ENCODE measurements at regions of chr12 and their contacts with region 1.

Region 1: GRCh38 chr12:48183091-48183875 is at the start of gene CCDC184:
- DNase-seq: peak; percentile 51 to 93 (median 68)
- ATAC-seq: peak; percentile 76
- H3K4me3 ChIP-seq: peak within 1 kb of the TSS; percentile 76
- H3K4me3 Mint-ChIP-seq: peak within 1 kb of the TSS; percentile 93
- H3K27ac ChIP-seq: no peak within 1 kb of the TSS
- H3K27ac Mint-ChIP-seq: peak within 1 kb of the TSS; percentile 50
- H3K4me1 ChIP-seq: peaks cover 25% of the 10 kb centered on the region
- H3K4me1 Mint-ChIP-seq: no peaks in the 10 kb centered on the region
- H3K27me3 ChIP-seq: peaks cover 14 to 15% of the 10 kb centered on the region in 2 experiments
- H3K27me3 Mint-ChIP-seq: peaks cover 47% of the 10 kb centered on the region
- CTCF ChIP-seq: peak; percentile 51
- total RNA-seq, gene CCDC184: 0.92 to 1.0 TPM

Region 2: DNA sequence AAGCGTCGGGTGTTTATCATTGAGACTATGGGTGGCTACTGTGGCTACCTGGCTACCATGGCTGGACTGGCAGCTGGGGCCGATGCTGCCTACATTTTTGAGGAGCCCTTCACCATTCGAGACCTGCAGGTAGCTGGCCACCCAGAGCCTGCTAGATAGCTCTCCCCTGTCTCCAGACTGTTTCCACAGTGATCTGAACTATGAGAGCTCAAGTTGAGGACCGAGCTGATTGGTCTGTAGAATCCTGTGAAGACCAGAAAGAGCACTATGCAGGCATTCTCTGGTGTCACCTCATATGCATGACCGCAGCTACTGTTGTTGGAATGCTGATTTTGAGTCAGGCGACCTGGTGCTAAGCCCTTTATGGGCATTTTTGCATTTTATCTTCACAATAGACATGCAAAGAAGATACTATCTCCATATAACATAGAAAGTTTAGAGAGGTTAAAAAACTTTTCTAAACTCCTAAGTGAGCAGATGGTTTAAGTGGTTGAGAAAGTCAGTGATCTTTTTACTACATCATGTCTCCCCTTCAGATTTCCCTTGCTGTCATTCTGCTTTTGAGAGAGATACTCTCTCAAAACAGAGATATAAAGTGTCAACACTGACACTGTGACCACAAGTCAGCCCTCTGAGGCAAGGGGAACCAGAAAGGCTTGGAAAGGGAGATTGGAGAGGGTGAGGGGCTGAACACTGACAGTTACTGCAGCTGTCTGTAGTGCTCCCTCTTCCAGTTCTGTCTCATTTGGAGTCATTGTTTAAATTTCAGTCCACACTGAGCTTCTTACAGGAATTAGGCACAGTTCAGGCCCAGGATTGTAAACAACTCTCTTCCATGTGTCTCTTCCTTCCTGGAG is 40.2 kb before region 1 on chr12:
- CTCF ChIA-PET with region 1: no interaction called
- POLR2A ChIA-PET with region 1: no interaction called
- intact Hi-C with region 1: no loop called
- DNase-seq: no peak
- ATAC-seq: no peak
- H3K4me3 ChIP-seq: no peak overlapping the region
- H3K4me3 Mint-ChIP-seq: no peak overlapping the region
- H3K27ac ChIP-seq: no peak overlapping the region
- H3K27ac Mint-ChIP-seq: peak overlapping the region; percentile 31
- H3K4me1 ChIP-seq: no peaks in the 10 kb centered on the region
- H3K4me1 Mint-ChIP-seq: no peaks in the 10 kb centered on the region
- H3K27me3 ChIP-seq: no peaks in the 10 kb centered on the region
- H3K27me3 Mint-ChIP-seq: no peaks in the 10 kb centered on the region
- CTCF ChIP-seq: no peak

Region 3: GRCh38 chr12:48216785-48217184 is 33.5 kb after region 1 on chr12:
- CTCF ChIA-PET with region 1: no interaction called
- POLR2A ChIA-PET with region 1: no interaction called
- intact Hi-C with region 1: no loop called
- DNase-seq: no peak
- ATAC-seq: no peak
- H3K4me3 ChIP-seq: no peak overlapping the region
- H3K4me3 Mint-ChIP-seq: no peak overlapping the region
- H3K27ac ChIP-seq: no peak overlapping the region
- H3K27ac Mint-ChIP-seq: no peak overlapping the region
- H3K4me1 ChIP-seq: peaks cover 8% of the 10 kb centered on the region
- H3K4me1 Mint-ChIP-seq: peaks cover 16% of the 10 kb centered on the region
- H3K27me3 ChIP-seq: no peaks in the 10 kb centered on the region
- H3K27me3 Mint-ChIP-seq: peaks cover 8% of the 10 kb centered on the region
- CTCF ChIP-seq: no peak

Region 4: GRCh38 chr12:48263617-48264016 is 80.3 kb after region 1 on chr12:
- CTCF ChIA-PET with region 1: no interaction called
- POLR2A ChIA-PET with region 1: no interaction called
- intact Hi-C with region 1: no loop called
- DNase-seq: no peak
- ATAC-seq: no peak
- H3K4me3 ChIP-seq: no peak overlapping the region
- H3K4me3 Mint-ChIP-seq: no peak overlapping the region
- H3K27ac ChIP-seq: no peak overlapping the region
- H3K27ac Mint-ChIP-seq: no peak overlapping the region
- H3K4me1 ChIP-seq: no peaks in the 10 kb centered on the region
- H3K4me1 Mint-ChIP-seq: no peaks in the 10 kb centered on the region
- H3K27me3 ChIP-seq: no peaks in the 10 kb centered on the region
- H3K27me3 Mint-ChIP-seq: peaks cover 24% of the 10 kb centered on the region
- CTCF ChIP-seq: no peak

Region 5: GRCh38 chr12:48350249-48351021 is 167.2 kb after region 1 on chr12 and contains the start of gene ZNF641:
- CTCF ChIA-PET with region 1: no interaction called
- POLR2A ChIA-PET with region 1: interaction called, 4 read pairs
- intact Hi-C with region 1: loop called in 1 of 2 experiments (anchors 5 kb)
- DNase-seq: peak; percentile 68 to 94 (median 80)
- ATAC-seq: peak; percentile 88
- H3K4me3 ChIP-seq: peak within 1 kb of the TSS; percentile 96
- H3K4me3 Mint-ChIP-seq: peak within 1 kb of the TSS; percentile 97
- H3K27ac ChIP-seq: peak within 1 kb of the TSS; percentile 70 to 81
- H3K27ac Mint-ChIP-seq: peak within 1 kb of the TSS; percentile 98
- H3K4me1 ChIP-seq: peaks cover 19% of the 10 kb centered on the region
- H3K4me1 Mint-ChIP-seq: peaks cover 47% of the 10 kb centered on the region
- H3K27me3 ChIP-seq: no peaks in the 10 kb centered on the region
- H3K27me3 Mint-ChIP-seq: no peaks in the 10 kb centered on the region
- CTCF ChIP-seq: no peak
- total RNA-seq, gene ZNF641: 16.6 to 19.8 TPM

Measured in CD4-positive, alpha-beta T cell (primary cell).